ENCODE measurements at regions of chr12 and their contacts with region 1.

Region 1: DNA sequence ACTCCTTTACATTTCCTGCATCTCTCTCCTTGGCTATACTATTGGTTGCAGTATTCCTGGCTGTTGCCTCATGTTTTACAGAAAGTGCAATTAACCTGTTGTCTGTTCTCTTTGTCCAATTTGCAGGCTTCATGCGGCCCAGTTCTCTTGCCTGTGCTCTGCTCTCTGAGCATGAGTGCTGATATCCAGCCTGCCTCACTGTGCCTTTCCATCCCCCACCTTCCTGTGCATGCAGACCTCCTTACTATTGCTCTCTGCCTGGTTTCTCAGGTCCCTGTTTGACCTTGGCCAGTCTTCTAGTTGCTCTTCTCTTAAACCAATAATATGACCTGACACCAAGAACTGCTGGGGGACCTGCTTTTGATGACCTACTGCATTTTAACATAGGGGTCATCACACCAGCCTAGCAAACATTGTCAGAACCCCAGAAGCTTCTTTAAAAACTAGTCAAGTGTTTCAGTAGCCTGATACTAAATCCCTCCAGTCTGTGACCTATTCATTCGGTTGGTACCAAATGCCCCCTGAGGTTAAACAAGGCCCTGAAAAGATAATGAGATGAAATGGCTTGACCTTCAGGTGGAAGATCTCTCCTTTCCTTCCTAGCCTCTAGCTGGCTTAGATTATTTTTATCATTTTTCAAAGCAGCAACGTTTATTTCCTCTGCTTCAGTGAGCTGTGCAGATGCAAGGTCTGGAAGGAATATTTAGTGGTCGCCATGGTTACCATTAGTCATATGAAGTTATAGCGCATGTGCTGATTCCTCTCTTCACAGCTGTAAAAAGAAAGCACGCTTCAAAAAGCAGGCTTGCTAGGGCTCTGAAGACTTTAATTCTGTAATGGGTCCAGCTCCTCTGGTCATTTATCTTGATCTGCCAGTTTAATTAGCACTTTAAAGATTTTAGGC is 216.5 kb downstream of the PHLDA1 start:
- DNase-seq: no peak
- H3K4me3 Mint-ChIP-seq: no peak overlapping the region
- H3K27ac Mint-ChIP-seq: no peak overlapping the region
- H3K4me1 Mint-ChIP-seq: peaks cover 22% of the 10 kb centered on the region
- H3K27me3 Mint-ChIP-seq: no peaks in the 10 kb centered on the region

Region 2: DNA sequence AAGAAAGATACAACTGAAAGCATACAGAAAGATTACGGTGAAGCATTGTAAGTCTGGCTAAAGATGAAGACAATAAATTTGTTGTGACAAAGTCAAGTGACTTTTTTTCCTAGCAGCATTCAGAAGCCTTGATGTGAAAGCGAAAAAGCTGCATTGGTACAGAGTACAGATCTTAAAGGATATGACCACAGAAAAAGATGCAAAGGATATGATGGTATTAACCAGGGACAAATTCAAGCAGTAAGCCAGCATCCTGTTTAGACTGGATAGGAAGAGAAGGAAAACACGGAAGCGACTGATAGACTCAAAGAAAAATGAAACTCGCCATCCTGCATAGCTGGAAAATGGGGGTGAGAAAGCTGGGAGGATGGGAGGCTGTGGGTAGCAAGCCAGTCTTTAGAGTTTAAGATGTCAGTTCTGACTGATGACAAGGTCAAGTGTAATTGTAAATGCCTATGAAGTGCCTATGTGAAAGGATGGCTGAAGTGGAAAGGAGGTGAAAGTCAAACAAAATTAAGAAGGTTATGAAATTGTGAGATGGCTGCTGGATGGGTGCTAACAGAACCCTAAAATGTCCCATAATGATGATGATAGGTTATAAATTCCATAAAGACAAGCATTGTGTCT is 124.0 kb after region 1 on chr12:
- CTCF ChIA-PET with region 1: no interaction called
- POLR2A ChIA-PET with region 1: no interaction called
- intact Hi-C with region 1: loop called (anchors 5 kb)
- DNase-seq: no peak
- H3K4me3 Mint-ChIP-seq: no peak overlapping the region
- H3K27ac Mint-ChIP-seq: no peak overlapping the region
- H3K4me1 Mint-ChIP-seq: peaks cover 20% of the 10 kb centered on the region
- H3K27me3 Mint-ChIP-seq: no peaks in the 10 kb centered on the region

Region 3: GRCh38 chr12:76037130-76038103 is 222.3 kb after region 1 on chr12:
- CTCF ChIA-PET with region 1: interaction called, 17 read pairs
- POLR2A ChIA-PET with region 1: interaction called, 3 read pairs
- intact Hi-C with region 1: no loop called
- DNase-seq: no peak
- H3K4me3 Mint-ChIP-seq: no peak overlapping the region
- H3K27ac Mint-ChIP-seq: no peak overlapping the region
- H3K4me1 Mint-ChIP-seq: peaks cover 19% of the 10 kb centered on the region
- H3K27me3 Mint-ChIP-seq: no peaks in the 10 kb centered on the region

Measured in activated CD4-positive, alpha-beta memory T cell treated with anti-CD3 and anti-CD28 coated beads for 36 hours (primary cell).